ENCODE measurements at regions of chr5 and their contacts with region 1.

Region 1: GRCh38 chr5:91641730-91642350 is 258.7 kb upstream of the ARRDC3 start:
- DNase-seq: no peak
- H3K4me3 ChIP-seq: no peak overlapping the region
- H3K27ac ChIP-seq: no peak overlapping the region
- H3K4me1 ChIP-seq: no peaks in the 10 kb centered on the region
- H3K27me3 ChIP-seq: no peaks in the 10 kb centered on the region
- CTCF ChIP-seq: peak; percentile 47 to 57 (median 54)
- POLR2A ChIP-seq: no peak

Region 2: GRCh38 chr5:90585337-90585986 is 1056.4 kb before region 1 on chr5:
- intact Hi-C with region 1: no loop called
- DNase-seq: no peak
- H3K4me3 ChIP-seq: no peak overlapping the region
- H3K27ac ChIP-seq: no peak overlapping the region
- H3K4me1 ChIP-seq: no peaks in the 10 kb centered on the region
- H3K27me3 ChIP-seq: no peaks in the 10 kb centered on the region
- CTCF ChIP-seq: no peak
- POLR2A ChIP-seq: no peak

Region 3: DNA sequence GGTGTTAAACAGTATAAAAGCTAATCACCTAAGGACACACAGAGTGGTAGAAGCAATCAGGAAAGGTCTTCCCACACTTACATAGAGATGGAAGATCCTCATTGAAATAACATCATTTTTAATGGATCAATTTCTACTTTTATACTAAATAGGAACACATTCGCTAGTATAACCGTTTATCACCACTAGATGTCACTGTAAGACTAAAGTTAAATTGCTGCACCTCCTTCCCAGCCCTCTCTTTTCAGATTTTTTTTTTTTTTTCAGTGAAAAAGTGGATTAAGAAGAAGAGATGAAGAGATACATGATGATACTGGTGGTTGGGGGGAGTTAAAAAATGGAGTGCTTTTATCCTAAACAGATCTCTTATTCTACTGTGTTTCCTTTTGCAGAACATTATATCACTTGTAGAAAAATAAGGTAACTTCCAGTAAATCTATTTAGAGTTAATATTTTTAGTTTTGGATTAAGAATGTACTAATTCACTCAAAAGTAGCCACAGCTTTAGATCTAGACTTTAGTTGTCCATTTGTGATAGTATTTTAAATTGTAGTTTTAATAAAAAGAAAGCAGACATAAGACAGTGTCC is 141.8 kb before region 1 on chr5:
- intact Hi-C with region 1: loop called (anchors 10 kb)
- DNase-seq: no peak
- H3K4me3 ChIP-seq: no peak overlapping the region
- H3K27ac ChIP-seq: no peak overlapping the region
- H3K4me1 ChIP-seq: no peaks in the 10 kb centered on the region
- H3K27me3 ChIP-seq: no peaks in the 10 kb centered on the region
- CTCF ChIP-seq: peak in 2 of 3 donors; percentile 45 to 53
- POLR2A ChIP-seq: no peak

Region 4: DNA sequence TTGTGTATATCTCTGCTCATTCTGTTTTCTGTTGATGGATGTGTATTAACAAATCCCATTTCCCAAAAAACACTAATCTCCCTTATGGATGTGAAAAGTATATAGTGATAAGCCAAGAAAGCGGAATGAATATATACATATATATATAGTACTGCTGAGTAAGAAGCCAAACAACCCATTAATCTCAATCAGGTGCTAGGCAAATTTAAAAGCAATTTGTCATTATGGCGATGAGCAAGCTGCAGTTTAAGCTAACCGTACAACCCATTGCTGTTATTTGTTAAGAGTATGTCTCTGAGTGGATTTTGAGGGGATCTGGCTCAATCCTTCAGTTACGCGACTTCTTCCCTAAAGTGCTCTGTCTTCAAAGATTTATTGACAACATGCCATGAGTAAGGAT is 381.7 kb after region 1 on chr5:
- intact Hi-C with region 1: loop called (anchors 5 kb)
- DNase-seq: no peak
- H3K4me3 ChIP-seq: no peak overlapping the region
- H3K27ac ChIP-seq: no peak overlapping the region
- H3K4me1 ChIP-seq: no peaks in the 10 kb centered on the region
- H3K27me3 ChIP-seq: no peaks in the 10 kb centered on the region
- CTCF ChIP-seq: no peak
- POLR2A ChIP-seq: no peak